Ascending aorta (tissue), 2 donors: ENCODE measurements at regions of chr15 and their contacts with region 1.

Region 1: GRCh38 chr15:99565299-99566156 is at the start of gene MEF2A:
- DNase-seq: peak; percentile 80 to 95
- H3K4me3 ChIP-seq: peak within 1 kb of the TSS; percentile 82 to 94
- H3K27ac ChIP-seq: peak within 1 kb of the TSS; percentile 98 to 100
- H3K4me1 ChIP-seq: peaks cover 2 to 26% of the 10 kb centered on the region in 2 donors
- H3K27me3 ChIP-seq: no peaks in the 10 kb centered on the region
- CTCF ChIP-seq: no peak
- total RNA-seq, gene MEF2A: 99.4 TPM

Region 2: DNA sequence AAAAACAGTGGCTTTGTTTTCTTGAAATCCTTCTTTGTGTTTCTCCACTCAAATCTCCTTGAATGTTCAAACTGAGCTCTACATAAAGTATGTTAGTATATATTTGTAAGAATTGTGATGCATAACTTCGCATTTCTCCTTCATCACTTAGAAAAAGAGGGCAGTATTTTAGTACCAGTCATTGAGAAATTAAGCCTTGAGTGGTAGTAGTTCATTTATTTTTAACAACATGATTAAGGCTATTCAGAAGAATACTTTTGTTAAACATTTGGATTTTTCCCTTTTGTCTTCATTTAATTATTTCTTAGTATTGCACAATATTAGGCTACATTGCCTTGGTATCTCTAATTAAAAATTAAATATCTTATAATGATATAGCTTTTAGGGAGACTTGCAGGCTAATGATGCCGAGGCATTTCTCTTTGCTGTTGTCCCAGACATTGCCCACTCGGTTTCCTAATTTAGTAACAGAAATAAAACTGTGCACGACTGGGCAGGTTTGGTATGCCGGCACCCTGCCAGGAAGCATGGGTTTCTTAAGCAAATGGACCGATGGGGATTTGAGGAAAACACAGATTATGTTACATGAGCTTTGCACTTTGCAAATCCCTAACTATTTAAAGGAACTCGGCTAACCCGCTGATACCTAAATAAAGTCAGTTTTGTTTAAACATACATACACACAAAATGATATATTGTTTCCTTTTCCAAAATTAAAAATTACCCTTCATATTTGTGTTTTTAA is 259.6 kb before region 1 on chr15:
- intact Hi-C with region 1: loop called (anchors 5 kb)
- DNase-seq: peak; percentile 22 to 92
- H3K4me3 ChIP-seq: peak overlapping the region; percentile 11 to 43
- H3K27ac ChIP-seq: peak overlapping the region; percentile 76 to 81
- H3K4me1 ChIP-seq: peaks cover 0 to 6% of the 10 kb centered on the region in 2 donors
- H3K27me3 ChIP-seq: no peaks in the 10 kb centered on the region
- CTCF ChIP-seq: no peak

Region 3: GRCh38 chr15:99452774-99453636 is 112.5 kb before region 1 on chr15:
- intact Hi-C with region 1: loop called (anchors 1 kb)
- DNase-seq: peak; percentile 87 to 96
- H3K4me3 ChIP-seq: peak overlapping the region in 1 of 2 donors; percentile 50
- H3K27ac ChIP-seq: peak overlapping the region; percentile 95 to 96
- H3K4me1 ChIP-seq: peaks cover 21 to 36% of the 10 kb centered on the region in 2 donors
- H3K27me3 ChIP-seq: no peaks in the 10 kb centered on the region
- CTCF ChIP-seq: no peak

Region 4: GRCh38 chr15:99536422-99537040 is 29.0 kb before region 1 on chr15:
- intact Hi-C with region 1: loop called (anchors 1 kb)
- DNase-seq: peak; percentile 65 to 94
- H3K4me3 ChIP-seq: no peak overlapping the region
- H3K27ac ChIP-seq: peak overlapping the region; percentile 81 to 84
- H3K4me1 ChIP-seq: peaks cover 5 to 14% of the 10 kb centered on the region in 2 donors
- H3K27me3 ChIP-seq: no peaks in the 10 kb centered on the region
- CTCF ChIP-seq: no peak

Region 5: DNA sequence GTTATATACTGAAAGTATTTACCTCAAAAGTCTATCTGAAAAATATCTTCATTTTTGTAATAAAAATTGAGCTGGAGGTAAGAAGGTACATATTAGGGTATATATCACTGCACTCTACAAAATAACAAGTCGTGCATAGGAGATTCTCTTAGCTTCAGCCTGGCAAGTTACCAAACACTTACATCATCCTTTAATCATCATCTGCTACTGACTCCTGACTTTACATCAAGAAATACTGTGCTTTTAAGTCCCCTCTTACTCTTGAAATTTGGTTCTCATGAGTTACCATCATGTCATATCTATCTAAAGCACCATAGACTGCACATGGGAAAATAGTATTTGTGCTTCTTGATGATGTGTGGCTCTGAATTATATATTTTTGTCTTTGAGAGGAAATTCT is 116.9 kb after region 1 on chr15:
- intact Hi-C with region 1: no loop called
- DNase-seq: no peak
- H3K4me3 ChIP-seq: no peak overlapping the region
- H3K27ac ChIP-seq: peak overlapping the region; percentile 1 to 16
- H3K4me1 ChIP-seq: peaks cover 0 to 2% of the 10 kb centered on the region in 2 donors
- H3K27me3 ChIP-seq: no peaks in the 10 kb centered on the region
- CTCF ChIP-seq: no peak

Region 6: DNA sequence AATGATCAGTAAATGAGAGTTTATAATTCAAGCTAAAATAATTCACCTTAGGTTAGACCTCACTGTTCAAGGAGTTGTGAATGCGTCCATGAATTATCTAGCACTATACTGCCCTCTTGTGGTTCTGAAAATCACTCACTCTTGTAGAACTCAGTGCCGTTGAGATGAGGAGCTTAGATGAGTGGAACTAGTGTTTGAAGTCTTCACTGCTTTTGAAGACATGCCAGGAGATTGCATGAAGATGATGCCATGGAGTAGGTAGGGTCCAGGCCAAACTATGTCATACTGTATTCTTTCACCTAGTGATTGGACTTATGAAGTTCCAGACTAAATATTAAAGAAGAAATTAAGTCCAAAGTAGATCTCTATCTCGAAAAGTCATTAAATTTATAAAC is 138.9 kb after region 1 on chr15:
- intact Hi-C with region 1: loop called (anchors 1 kb)
- DNase-seq: no peak
- H3K4me3 ChIP-seq: no peak overlapping the region
- H3K27ac ChIP-seq: peak overlapping the region; percentile 82 to 83
- H3K4me1 ChIP-seq: peaks cover 0 to 26% of the 10 kb centered on the region in 2 donors
- H3K27me3 ChIP-seq: no peaks in the 10 kb centered on the region
- CTCF ChIP-seq: peak; percentile 66 to 73 (median 66)